ENCODE measurements at regions of chr5 and their contacts with region 1.

Region 1: DNA sequence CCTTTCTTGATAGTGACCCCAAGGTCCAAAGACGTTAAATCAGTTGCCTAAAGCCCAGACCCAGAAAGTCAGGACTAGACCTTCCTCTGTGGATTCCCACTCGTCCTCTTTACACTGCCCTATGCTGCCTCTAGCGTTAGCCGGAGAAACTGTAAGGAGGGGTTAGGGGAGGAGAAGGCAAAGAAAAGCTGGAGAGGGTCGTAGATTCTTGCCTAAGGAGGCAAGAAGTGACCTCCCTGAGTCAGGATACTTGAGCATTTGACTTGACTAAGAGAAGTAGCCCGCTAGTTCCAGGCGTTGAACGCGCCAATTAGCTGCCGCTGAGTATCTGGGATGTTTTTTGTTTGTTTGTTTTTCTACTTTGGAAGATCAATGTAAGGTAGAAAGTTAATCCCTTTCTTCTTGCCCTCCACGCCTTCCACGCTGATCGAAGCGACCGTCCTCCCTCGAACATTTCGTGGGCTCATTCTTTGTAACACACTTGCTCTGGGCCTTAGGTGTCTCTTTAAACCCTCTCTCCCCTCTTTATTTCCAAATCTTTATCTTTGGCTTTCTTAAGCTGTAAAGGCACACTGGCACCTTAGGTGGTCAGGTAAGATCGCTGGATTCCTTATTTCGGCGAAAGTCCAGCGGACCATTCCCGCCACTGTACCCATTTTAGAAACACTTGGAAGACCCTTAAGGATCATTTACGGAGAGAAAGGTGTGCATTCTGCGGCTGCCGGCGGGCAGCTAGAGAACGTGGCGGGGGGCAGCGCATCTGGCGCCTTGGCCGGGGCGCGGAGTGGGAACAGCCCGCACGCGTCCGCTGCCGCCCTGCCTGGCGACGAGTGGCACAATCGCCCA is 5.1 kb upstream of the RGMB start:
- DNase-seq: peak; percentile 52 to 68
- ATAC-seq: peak; percentile 36 to 68; a peak in 3 of 6 replicates
- H3K4me3 ChIP-seq: peak overlapping the region; percentile 65
- H3K27ac ChIP-seq: peak overlapping the region; percentile 4 to 83; a peak in 4 of 6 replicates
- H3K4me1 ChIP-seq: peaks cover 10% of the 10 kb centered on the region; the same call in 2 of the 3 replicates
- CTCF ChIP-seq: peak; percentile 70
- EP300 ChIP-seq: no peak
- POLR2A ChIP-seq: no peak
- RAD21 ChIP-seq: peak; percentile 68 to 77

Region 2: GRCh38 chr5:97231025-97231636 is 1537.3 kb before region 1 on chr5:
- CTCF ChIA-PET with region 1: interaction called, 16 read pairs
- POLR2A ChIA-PET with region 1: no interaction called
- DNase-seq: peak; percentile 31 to 73
- ATAC-seq: peak; percentile 80 to 83; a peak in 5 of 6 replicates
- H3K4me3 ChIP-seq: no peak overlapping the region
- H3K27ac ChIP-seq: no peak overlapping the region
- H3K4me1 ChIP-seq: no peaks in the 10 kb centered on the region
- CTCF ChIP-seq: peak; percentile 89
- EP300 ChIP-seq: no peak
- POLR2A ChIP-seq: no peak
- RAD21 ChIP-seq: peak; percentile 82

Region 3: GRCh38 chr5:98570661-98571191 is 197.7 kb before region 1 on chr5:
- CTCF ChIA-PET with region 1: no interaction called
- POLR2A ChIA-PET with region 1: no interaction called
- DNase-seq: no peak
- ATAC-seq: no peak
- H3K4me3 ChIP-seq: no peak overlapping the region
- H3K27ac ChIP-seq: no peak overlapping the region
- H3K4me1 ChIP-seq: no peaks in the 10 kb centered on the region
- CTCF ChIP-seq: no peak
- EP300 ChIP-seq: no peak
- POLR2A ChIP-seq: no peak
- RAD21 ChIP-seq: no peak

Region 4: DNA sequence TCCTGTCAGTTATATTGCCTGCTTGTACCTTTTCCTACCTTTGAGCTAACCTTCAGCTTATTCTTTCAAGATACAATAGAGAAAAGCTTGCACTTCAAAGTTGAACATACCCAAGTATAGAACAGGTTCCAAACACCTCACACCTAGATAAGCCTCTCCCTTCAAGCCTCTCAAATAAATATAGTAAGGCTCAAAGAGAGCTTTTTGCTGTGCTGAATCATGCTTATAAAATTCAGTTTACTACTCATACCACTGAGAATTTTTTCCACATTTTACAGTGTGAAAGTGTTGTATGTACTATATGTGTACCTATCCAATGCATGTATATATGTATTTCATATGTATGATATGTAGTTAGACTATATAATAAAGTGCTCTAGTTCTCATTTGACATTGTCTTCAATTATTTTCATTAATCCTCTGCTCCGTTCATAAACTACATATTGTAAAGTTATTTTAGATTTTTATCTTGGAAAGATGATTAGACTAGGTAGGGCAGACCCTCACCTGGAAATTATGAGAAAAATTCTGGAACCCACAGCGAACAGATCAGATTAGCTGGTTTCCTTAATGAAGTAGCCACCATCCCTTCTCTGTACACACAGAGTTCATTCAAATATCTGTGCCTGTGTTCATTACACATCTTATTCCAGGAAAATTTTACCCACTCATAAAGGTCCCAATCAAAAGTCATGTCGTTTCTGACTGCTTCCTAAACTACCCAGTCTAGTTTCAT is 144.1 kb before region 1 on chr5:
- CTCF ChIA-PET with region 1: no interaction called
- POLR2A ChIA-PET with region 1: no interaction called
- DNase-seq: no peak
- ATAC-seq: no peak
- H3K4me3 ChIP-seq: no peak overlapping the region
- H3K27ac ChIP-seq: no peak overlapping the region
- H3K4me1 ChIP-seq: no peaks in the 10 kb centered on the region
- CTCF ChIP-seq: no peak
- EP300 ChIP-seq: no peak
- POLR2A ChIP-seq: no peak
- RAD21 ChIP-seq: no peak

Region 5: DNA sequence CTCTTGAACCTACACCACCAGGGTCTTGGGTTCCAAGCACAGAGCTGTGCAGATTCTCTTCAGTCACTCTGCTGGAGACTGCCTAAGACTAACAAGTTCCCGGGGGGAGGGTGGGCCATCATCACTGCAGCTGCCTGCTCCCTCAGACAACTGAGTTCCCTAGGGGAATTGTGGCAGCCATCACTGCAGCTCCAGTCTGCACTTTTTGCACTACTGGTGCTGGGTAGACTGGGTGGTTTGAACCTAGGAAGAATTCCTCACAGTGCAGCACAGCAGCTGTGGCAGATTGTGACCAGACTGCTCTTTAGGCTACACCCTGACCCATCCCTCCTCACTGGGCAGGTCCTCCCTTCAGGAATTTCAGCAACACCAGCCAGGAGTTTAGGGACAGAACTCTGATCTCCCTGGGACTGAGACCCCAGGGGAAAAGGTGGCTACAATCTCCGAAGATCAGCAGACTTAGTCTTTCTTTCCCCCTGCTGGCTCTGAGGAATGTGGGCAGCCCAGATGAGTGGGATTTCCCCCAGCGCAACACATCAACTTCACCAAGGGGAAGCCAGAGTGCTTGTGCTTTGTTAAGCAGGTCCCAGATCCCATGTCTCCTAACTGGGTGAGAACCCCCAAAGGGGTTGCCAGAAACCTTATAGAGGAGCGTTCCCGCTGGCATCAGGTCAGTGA is 25.8 kb before region 1 on chr5:
- CTCF ChIA-PET with region 1: interaction called, 10 read pairs
- POLR2A ChIA-PET with region 1: no interaction called
- DNase-seq: no peak
- ATAC-seq: no peak
- H3K4me3 ChIP-seq: no peak overlapping the region
- H3K27ac ChIP-seq: no peak overlapping the region
- H3K4me1 ChIP-seq: no peaks in the 10 kb centered on the region
- CTCF ChIP-seq: no peak
- EP300 ChIP-seq: no peak
- POLR2A ChIP-seq: no peak
- RAD21 ChIP-seq: no peak

Region 6: DNA sequence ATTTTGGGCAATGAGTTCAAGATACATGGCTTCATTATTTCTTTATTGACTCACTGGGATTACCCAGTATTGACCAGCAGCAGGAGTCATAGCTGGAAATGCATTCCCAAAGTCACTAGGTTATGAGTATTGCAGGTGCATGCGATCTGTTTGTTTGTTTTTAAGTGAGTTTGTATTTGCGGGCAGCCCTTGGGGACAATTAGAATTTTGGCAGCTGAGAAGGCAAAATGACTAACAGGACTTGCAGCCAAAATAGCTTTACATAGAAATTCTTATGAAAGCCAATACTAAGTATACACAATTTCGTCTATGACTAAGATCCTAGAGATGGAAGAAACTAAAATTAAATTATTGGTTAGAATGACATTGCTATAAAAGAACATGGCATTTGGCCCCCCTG is 13.0 kb before region 1 on chr5:
- CTCF ChIA-PET with region 1: interaction called, 10 read pairs
- POLR2A ChIA-PET with region 1: no interaction called
- DNase-seq: no peak
- ATAC-seq: no peak
- H3K4me3 ChIP-seq: no peak overlapping the region
- H3K27ac ChIP-seq: no peak overlapping the region
- H3K4me1 ChIP-seq: no peaks in the 10 kb centered on the region
- CTCF ChIP-seq: no peak
- EP300 ChIP-seq: no peak
- POLR2A ChIP-seq: no peak
- RAD21 ChIP-seq: no peak

Region 7: DNA sequence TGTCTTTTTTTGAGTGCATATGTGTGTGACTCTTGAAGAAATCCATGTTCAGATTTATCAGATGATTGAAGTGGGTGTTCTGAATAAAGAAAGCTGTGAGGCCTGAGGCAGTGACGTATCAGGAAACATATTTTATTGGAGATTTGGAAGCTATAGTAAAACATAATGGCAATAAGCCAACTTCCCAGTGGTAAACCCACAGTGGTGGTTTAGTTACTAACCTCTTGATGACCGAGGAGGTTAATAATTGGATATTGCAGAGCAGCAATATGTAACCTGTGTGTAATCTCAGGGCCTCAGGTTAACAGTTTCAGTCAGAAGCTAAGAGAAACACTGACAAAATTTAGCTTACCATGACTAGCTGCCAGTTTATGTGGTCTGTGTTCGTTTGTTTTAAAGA is 12.0 kb after region 1 on chr5:
- CTCF ChIA-PET with region 1: interaction called, 49 read pairs
- POLR2A ChIA-PET with region 1: no interaction called
- DNase-seq: no peak
- ATAC-seq: no peak
- H3K4me3 ChIP-seq: no peak overlapping the region
- H3K27ac ChIP-seq: no peak overlapping the region
- H3K4me1 ChIP-seq: peaks cover 8% of the 10 kb centered on the region
- CTCF ChIP-seq: no peak
- EP300 ChIP-seq: no peak
- POLR2A ChIP-seq: no peak
- RAD21 ChIP-seq: no peak

Region 8: DNA sequence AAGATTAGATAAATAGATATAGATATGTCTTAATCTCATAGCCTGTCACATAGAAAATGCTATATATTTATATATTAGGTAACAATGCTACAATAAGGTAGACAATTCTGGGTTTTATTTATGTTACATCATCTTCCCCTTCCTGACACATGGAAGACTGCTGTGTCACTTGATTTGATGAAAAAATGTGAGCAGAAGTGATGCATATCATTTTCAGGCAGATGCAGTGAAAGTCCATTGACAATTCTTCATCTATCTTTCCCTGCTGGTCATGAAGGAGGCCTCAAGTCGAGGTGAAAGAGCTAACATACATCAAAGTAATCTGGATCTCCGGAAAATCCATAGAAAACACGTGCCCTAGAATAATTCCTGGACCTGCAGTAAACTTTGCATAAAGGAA is 218.2 kb after region 1 on chr5:
- CTCF ChIA-PET with region 1: no interaction called
- POLR2A ChIA-PET with region 1: no interaction called
- DNase-seq: no peak
- ATAC-seq: no peak
- H3K4me3 ChIP-seq: no peak overlapping the region
- H3K27ac ChIP-seq: no peak overlapping the region
- H3K4me1 ChIP-seq: no peaks in the 10 kb centered on the region
- CTCF ChIP-seq: no peak
- EP300 ChIP-seq: no peak
- POLR2A ChIP-seq: no peak
- RAD21 ChIP-seq: no peak